ENCODE measurements at regions of chr3 and their contacts with region 1.

Region 1: GRCh38 chr3:50272911-50273693 is 4.2 kb downstream of the SEMA3B start:
- DNase-seq: peak; percentile 73 to 90
- ATAC-seq: peak; percentile 43

Region 2: DNA sequence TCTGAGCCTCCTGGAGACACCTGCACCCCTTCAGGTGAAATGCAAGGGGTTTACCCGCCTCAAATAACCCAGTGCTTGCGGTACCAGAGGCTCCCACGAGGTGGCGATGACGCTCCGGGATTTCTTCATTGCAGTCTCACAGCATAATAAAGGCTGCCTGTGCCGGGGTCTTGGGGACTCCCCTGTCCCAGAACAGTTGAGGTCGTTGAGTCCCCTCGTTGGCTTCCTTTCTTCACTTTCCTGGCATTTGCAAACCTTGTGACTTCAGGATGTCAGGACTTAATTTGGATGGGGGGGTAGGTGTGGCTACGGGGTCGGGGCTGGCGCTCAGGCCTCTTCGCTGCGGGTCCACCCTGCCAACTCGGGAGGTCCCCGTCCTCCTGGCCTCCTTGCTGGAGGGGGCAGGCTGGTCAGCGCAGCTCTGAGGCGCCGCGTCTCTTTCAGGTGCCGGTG is 80.4 kb before region 1 on chr3:
- intact Hi-C with region 1: loop called (anchors 5 to 10 kb)
- DNase-seq: peak in 1 of 2 donors; percentile 78
- ATAC-seq: peak; percentile 39

Region 3: DNA sequence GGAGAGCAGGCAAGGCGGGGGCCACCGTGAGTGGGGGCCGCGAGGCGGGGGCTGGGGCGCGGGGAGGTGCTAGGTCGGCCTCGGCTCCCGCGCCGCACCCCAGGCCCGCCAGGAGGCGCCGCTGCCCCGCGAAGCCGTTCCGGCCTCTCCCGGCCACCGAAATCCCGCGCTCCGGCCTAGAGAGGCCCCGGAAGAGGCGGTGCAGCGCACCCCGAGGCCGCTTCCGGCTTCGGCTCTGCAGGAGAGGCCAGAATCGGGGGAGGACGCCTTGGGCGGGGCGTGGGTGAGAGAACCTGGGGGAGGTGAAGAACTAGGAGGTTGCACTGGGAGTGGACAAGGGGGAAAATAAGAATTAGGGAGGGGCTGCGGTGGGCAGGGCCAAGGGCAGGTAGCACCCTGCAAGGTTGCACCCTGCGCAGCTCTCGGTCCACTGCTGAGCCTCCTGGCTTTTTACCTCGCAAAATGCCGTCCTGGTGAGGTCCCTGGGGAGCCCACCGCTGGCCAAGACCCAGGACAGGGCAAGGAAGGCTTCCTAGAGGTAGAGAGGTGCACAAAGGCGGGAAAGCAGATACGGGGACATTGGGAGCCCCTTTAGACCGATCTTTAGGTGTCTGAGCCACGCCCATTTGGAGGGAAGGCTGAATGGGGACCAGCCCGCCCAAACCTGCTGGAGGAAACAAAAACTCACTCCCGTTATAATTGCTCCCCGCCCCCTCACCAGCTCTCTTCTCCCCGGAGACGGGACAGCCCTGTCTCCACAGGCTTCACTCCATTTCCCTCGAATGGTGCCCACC is 45.5 kb before region 1 on chr3:
- intact Hi-C with region 1: loop called in 1 of 2 experiments (anchors 2 kb)
- DNase-seq: peak; percentile 94
- ATAC-seq: peak; percentile 89

Region 4: GRCh38 chr3:50509715-50510114 is 236.6 kb after region 1 on chr3:
- intact Hi-C with region 1: no loop called
- DNase-seq: no peak
- ATAC-seq: no peak